ENCODE measurements at regions of chr5 and their contacts with region 1.

Region 1: DNA sequence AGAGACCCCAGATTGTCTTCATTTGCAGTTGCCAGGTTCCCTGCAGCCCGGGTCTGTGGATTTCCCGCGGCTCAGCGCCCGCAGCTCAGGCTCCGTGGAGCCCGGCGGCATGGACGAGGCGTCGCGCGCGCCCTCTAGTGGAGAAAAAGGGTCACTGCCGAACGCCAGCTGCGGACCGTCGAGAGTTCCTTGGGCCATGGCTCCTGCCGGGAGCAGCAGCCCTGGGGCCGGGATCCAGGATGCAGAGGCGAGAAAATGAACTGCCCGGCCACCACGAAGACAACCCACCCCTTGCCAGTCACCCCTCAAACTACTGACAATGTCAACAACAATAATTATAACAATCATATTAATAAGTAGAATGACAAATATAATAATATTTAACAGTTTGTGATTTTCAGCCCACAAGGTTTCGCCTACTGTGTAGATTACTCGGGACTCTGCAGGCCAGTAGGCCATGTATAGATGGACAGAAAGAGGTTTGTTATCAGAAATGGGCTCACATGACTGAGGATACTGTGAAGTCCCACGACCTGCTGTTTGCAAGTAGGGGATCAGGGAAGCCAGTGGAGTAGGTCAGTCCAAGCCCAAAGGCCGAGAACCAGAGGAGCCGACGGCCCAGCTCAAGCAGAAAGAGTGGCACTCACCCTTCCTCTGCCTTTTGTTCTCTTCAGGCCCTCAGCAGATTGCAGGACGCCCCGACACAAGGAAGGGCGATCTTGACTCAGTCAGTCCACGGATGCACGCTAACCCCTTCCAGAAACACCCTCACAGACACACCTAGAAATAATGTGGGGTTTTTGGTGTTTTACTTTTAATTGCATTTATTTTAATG is 43.1 kb downstream of the BOD1 start:
- DNase-seq: peak; percentile 69 to 92 (median 78)
- H3K4me3 ChIP-seq: peak overlapping the region in 45 of 59 donors; percentile 5 to 59 (median 39)
- H3K27ac ChIP-seq: peak overlapping the region in 16 of 59 donors; percentile 5 to 65 (median 30)
- H3K27me3 ChIP-seq: no peaks in the 10 kb centered on the region
- CTCF ChIP-seq: peak; percentile 92 to 100 (median 98)

Region 2: GRCh38 chr5:173513521-173513991 is 59.8 kb before region 1 on chr5:
- intact Hi-C with region 1: loop called in 1 of 2 experiments (anchors 5 kb)
- DNase-seq: no peak
- H3K4me3 ChIP-seq: no peak overlapping the region
- H3K27ac ChIP-seq: no peak overlapping the region
- H3K27me3 ChIP-seq: peaks cover 0 to under 1% (median 0%) of the 10 kb centered on the region in 45 donors
- CTCF ChIP-seq: peak in 13 of 56 donors; percentile 9 to 35 (median 19)

Region 3: DNA sequence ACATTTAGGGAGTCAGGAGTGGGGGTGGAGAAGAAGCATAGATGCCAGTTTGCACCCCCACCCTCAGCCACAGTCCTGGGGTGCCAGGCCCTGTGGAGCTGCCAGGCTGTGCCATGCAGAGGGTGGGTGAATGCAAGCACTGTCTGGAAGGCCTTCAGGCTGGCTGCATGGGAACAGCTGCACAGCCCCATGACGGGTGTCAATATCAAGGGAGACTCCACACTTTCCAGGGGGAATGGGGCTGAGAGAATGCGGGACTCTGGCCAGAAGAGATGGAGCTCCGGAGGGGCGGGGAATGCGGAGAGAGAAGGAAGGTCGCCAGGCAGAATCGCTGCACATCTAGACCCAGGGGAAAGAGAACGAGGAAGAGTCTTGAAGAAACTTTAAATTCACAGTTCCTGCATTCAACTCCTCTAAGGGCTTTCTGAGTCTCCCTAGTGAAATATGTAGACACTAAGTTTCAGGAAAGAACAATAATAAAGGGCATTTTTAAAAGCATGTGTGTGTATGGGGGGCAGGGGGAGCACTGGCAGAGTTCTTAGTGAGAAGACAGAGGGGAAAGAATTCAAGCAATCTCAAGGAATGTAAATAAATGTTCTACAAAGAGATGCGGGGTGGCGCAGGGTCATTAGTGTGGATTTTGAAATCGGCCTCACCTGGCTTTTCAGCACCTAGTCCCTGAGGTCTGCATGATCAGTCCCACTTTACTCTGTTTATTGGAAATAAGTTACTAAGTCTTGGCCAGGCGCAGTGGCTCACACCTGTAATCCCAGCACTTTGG is 16.0 kb before region 1 on chr5:
- intact Hi-C with region 1: loop called (anchors 2 kb)
- DNase-seq: peak; percentile 17 to 97 (median 92)
- H3K4me3 ChIP-seq: peak overlapping the region in 5 of 59 donors; percentile 13 to 39 (median 33)
- H3K27ac ChIP-seq: peak overlapping the region; percentile 79 to 100 (median 95)
- H3K27me3 ChIP-seq: peaks cover 0 to 14% (median 0%) of the 10 kb centered on the region in 45 donors
- CTCF ChIP-seq: peak in 7 of 56 donors; percentile 5 to 39 (median 19)